ENCODE measurements at regions of chr14 and their contacts with region 1.

Region 1: GRCh38 chr14:75293920-75294642 is 15.5 kb downstream of the FOS start:
- DNase-seq: peak; percentile 94
- ATAC-seq: peak; percentile 95
- H3K4me3 Mint-ChIP-seq: peak overlapping the region; percentile 74
- H3K27ac Mint-ChIP-seq: peak overlapping the region; percentile 90
- H3K4me1 Mint-ChIP-seq: peaks cover 22% of the 10 kb centered on the region
- H3K27me3 Mint-ChIP-seq: peaks cover 6% of the 10 kb centered on the region
- CTCF ChIP-seq: no peak

Region 2: GRCh38 chr14:75132382-75133086 is 161.5 kb before region 1 on chr14:
- CTCF ChIA-PET with region 1: interaction called, 268 read pairs
- POLR2A ChIA-PET with region 1: interaction called, 8 read pairs
- intact Hi-C with region 1: loop called (anchors 2 kb)
- DNase-seq: peak; percentile 57
- ATAC-seq: peak; percentile 85
- H3K4me3 Mint-ChIP-seq: no peak overlapping the region
- H3K27ac Mint-ChIP-seq: peak overlapping the region; percentile 32
- H3K4me1 Mint-ChIP-seq: peaks cover 19% of the 10 kb centered on the region
- H3K27me3 Mint-ChIP-seq: no peaks in the 10 kb centered on the region
- CTCF ChIP-seq: peak; percentile 72

Region 3: GRCh38 chr14:75249251-75249957 is 44.7 kb before region 1 on chr14:
- CTCF ChIA-PET with region 1: interaction called, 8 read pairs
- POLR2A ChIA-PET with region 1: interaction called, 17 read pairs
- intact Hi-C with region 1: no loop called
- DNase-seq: peak; percentile 96
- ATAC-seq: peak; percentile 79
- H3K4me3 Mint-ChIP-seq: peak overlapping the region; percentile 16
- H3K27ac Mint-ChIP-seq: peak overlapping the region; percentile 88
- H3K4me1 Mint-ChIP-seq: peaks cover 57% of the 10 kb centered on the region
- H3K27me3 Mint-ChIP-seq: peaks cover 4% of the 10 kb centered on the region
- CTCF ChIP-seq: no peak

Region 4: DNA sequence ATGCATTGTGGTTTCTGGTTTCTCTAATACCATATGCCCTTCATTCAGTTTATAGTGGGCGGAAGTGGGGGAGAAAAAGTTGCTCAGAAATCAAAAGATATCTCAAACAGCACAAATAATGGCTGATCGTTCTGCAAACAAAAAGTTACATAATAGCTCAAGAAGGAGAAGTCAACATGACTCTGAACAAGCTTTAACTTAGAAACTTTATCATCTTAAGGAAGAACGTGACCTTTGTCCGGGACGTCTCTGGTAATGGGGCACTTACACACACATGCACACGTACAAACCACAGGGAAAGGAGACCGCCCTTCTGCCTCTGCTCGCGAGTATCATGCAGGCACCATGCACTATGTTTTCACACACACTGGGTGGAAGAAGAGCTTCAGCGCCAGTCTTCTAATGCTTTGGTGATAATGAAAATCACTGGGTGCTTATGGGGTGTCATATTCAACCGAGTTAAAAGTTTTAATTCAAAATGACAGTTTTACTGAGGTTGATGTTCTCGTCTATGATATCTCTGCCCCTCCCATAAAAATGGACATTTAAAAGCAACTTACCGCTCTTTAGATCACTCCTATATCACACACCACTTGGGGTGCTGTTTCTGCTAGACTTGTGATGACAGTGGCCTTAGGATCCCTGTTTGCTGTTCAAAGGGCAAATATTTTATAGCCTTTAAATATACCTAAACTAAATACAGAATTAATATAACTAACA is 10.8 kb before region 1 on chr14:
- CTCF ChIA-PET with region 1: interaction called, 55 read pairs
- POLR2A ChIA-PET with region 1: interaction called, 11 read pairs
- intact Hi-C with region 1: no loop called
- DNase-seq: no peak
- ATAC-seq: no peak
- H3K4me3 Mint-ChIP-seq: no peak overlapping the region
- H3K27ac Mint-ChIP-seq: no peak overlapping the region
- H3K4me1 Mint-ChIP-seq: peaks cover 18% of the 10 kb centered on the region
- H3K27me3 Mint-ChIP-seq: peaks cover 14% of the 10 kb centered on the region
- CTCF ChIP-seq: no peak

Measured in activated CD8-positive, alpha-beta T cell treated with anti-CD3 and anti-CD28 coated beads for 36 hours (primary cell).